Mammary epithelial cell (primary cell): ENCODE measurements at regions of chr7 and their contacts with region 1.

Region 1: DNA sequence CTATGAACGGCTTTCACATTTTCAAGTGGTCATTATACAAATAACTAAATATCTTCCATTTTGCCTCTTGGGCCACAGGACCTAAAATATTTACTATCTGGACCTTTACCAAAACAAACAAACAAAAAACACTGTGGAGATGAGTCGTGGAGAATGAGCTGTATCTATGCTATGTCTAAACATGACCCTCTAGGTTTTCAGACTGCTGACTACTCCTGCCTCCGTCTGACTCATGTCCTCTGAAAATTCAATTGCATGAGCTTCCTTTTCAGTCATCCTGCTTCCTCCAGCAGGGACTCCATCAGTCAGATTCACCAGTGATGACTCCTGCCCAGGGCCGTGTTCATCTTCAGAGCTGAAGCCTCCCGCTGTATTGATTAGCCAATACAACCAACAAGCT is 96.8 kb downstream of the COL28A1 start:
- DNase-seq: peak; percentile 96
- H3K4me3 ChIP-seq: no peak overlapping the region
- H3K27ac ChIP-seq: peak overlapping the region; percentile 71
- H3K4me1 ChIP-seq: peaks cover 22% of the 10 kb centered on the region
- H3K27me3 ChIP-seq: no peaks in the 10 kb centered on the region
- CTCF ChIP-seq: peak in 1 of 2 donors; percentile 16

Region 2: GRCh38 chr7:7498856-7499580 is 60.2 kb after region 1 on chr7:
- CTCF ChIA-PET with region 1: interaction called, 3 read pairs
- dilution Hi-C with region 1: no loop called
- in situ Hi-C with region 1: no loop called
- intact Hi-C with region 1: loop called (anchors 10 kb)
- DNase-seq: no peak
- H3K4me3 ChIP-seq: no peak overlapping the region
- H3K27ac ChIP-seq: no peak overlapping the region
- H3K4me1 ChIP-seq: no peaks in the 10 kb centered on the region
- H3K27me3 ChIP-seq: no peaks in the 10 kb centered on the region
- CTCF ChIP-seq: no peak

Region 3: DNA sequence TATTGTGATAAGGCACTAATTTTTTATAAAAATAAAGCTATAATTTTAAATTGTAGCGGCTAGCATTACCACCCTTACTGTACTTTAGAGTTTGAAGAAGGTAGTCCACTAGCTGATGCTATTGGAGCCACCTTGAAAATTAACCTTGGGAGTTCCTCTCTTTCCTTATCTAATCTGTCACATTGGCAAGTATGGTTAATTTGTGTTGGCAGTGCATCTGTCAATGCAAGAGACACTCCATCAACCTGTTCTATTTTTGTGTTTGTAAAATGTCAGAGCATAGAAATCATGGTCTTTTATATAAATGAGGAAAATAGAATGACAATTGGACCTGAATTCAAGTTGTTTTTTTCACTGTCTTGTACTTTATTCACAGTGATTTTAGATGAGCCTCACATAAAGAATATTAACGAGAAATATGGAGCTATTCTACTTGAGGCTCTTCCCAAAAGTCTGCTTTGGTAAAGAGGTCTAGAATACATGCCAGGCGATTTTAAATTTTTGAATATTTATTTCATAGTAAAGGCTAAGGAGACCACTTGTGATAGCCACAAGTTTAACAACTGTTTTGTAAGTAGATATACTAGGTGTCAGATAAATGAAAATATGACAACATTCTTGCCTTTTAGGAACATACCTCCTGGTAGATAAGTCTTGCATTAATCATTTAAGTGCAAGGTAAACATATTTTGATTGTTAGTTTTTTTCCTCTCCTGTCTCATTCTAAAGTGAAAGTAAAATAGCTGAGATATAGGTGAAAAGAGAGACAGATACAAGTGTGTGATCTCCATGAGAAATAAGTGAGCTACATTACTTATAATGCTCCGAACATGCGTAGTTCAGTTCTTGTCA is 550.5 kb after region 1 on chr7:
- CTCF ChIA-PET with region 1: no interaction called
- dilution Hi-C with region 1: no loop called
- in situ Hi-C with region 1: no loop called
- intact Hi-C with region 1: no loop called
- DNase-seq: no peak
- H3K4me3 ChIP-seq: no peak overlapping the region
- H3K27ac ChIP-seq: no peak overlapping the region
- H3K4me1 ChIP-seq: no peaks in the 10 kb centered on the region
- H3K27me3 ChIP-seq: no peaks in the 10 kb centered on the region
- CTCF ChIP-seq: no peak